ENCODE measurements at regions of chr2 and their contacts with region 1.

Region 1: DNA sequence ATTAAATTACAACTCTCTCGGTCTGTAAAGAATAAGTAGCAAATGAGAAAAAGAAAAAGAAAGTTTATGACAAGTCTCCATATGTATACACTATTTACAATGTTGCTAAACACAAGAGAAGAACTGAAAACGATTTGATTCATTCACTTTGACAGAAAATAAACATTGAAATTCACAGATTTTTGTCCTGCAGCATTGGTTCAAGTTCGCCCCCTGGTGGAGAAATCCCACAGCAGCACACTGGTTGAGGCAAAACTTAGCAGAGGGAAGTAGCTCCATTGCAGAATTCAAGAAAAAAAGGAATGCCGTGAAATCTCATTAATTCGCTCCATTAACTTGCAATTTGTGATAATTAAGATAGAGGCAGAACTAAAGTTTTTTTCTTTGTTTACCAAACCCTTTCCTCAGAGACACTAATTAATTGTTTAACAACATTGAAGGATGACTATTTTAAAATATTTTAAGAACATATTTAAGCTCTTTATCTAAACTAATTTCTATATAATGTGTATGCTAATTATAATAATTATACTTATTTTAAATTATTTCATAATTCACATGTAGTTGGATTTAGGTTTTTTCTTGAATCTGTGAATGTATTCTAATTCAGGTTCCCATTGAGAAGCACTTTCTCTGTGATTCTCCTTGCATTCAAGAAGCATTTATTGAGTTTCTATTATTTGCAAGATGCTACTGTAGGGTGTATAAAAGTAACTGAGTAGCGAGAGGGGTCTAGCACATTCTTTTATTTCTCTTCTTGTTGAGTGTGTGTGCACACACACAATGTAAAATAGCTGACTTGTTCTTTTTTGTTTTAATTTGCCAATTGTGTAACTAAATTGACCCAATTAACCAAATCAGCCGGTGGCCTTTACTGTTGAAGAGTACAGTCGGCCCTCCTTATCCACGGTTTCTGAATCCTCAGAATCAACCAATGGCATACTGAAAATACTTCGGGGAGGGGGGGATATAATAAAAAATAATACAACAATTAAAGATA is 74.1 kb downstream of the COL4A3 start:
- DNase-seq: peak; percentile 68
- ATAC-seq: no peak
- H3K4me3 Mint-ChIP-seq: no peak overlapping the region
- H3K27ac Mint-ChIP-seq: no peak overlapping the region
- H3K4me1 Mint-ChIP-seq: no peaks in the 10 kb centered on the region
- H3K27me3 Mint-ChIP-seq: peaks cover 17% of the 10 kb centered on the region

Region 2: GRCh38 chr2:226862623-226863022 is 375.9 kb before region 1 on chr2:
- CTCF ChIA-PET with region 1: no interaction called
- DNase-seq: no peak
- ATAC-seq: no peak
- H3K4me3 Mint-ChIP-seq: no peak overlapping the region
- H3K27ac Mint-ChIP-seq: no peak overlapping the region
- H3K4me1 Mint-ChIP-seq: peaks cover 6% of the 10 kb centered on the region
- H3K27me3 Mint-ChIP-seq: no peaks in the 10 kb centered on the region

Region 3: GRCh38 chr2:227132986-227133385 is 105.6 kb before region 1 on chr2:
- CTCF ChIA-PET with region 1: interaction called, 22 read pairs
- DNase-seq: no peak
- ATAC-seq: no peak
- H3K4me3 Mint-ChIP-seq: no peak overlapping the region
- H3K27ac Mint-ChIP-seq: no peak overlapping the region
- H3K4me1 Mint-ChIP-seq: no peaks in the 10 kb centered on the region
- H3K27me3 Mint-ChIP-seq: peaks cover 16% of the 10 kb centered on the region

Region 4: DNA sequence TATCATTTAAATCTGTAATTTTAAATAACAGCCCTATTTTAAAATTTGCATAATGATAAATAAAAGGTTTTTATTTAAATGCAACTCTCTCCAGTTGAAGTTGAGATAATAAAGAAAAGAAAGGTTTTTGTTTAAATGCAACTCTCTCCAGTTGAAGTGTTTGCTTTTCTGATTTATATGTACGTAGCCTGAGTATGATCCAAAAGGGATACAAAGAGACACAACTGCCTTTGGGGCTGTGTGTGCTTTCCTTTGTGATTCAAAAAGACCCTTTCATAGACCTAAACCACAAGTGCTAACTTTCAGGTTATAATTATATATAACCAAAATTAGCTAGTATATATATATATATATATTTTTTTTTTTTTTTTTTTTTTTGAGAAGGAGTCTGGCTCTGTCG is 10.3 kb after region 1 on chr2:
- CTCF ChIA-PET with region 1: interaction called, 17 read pairs
- DNase-seq: no peak
- ATAC-seq: no peak
- H3K4me3 Mint-ChIP-seq: no peak overlapping the region
- H3K27ac Mint-ChIP-seq: no peak overlapping the region
- H3K4me1 Mint-ChIP-seq: no peaks in the 10 kb centered on the region
- H3K27me3 Mint-ChIP-seq: peaks cover 3% of the 10 kb centered on the region

Region 5: GRCh38 chr2:227766373-227766883 is 527.9 kb after region 1 on chr2:
- CTCF ChIA-PET with region 1: interaction called, 13 read pairs
- DNase-seq: peak; percentile 68
- ATAC-seq: peak; percentile 78
- H3K4me3 Mint-ChIP-seq: no peak overlapping the region
- H3K27ac Mint-ChIP-seq: no peak overlapping the region
- H3K4me1 Mint-ChIP-seq: peaks cover 2% of the 10 kb centered on the region
- H3K27me3 Mint-ChIP-seq: peaks cover 2% of the 10 kb centered on the region

Measured in activated CD8-positive, alpha-beta memory T cell treated with anti-CD3 and anti-CD28 coated beads, Interleukin-2, amount 10 ng/mL, durations not matched to agents 7 days and 5 days (primary cell).